ENCODE measurements at regions of chr17 and their contacts with region 1.

Region 1: DNA sequence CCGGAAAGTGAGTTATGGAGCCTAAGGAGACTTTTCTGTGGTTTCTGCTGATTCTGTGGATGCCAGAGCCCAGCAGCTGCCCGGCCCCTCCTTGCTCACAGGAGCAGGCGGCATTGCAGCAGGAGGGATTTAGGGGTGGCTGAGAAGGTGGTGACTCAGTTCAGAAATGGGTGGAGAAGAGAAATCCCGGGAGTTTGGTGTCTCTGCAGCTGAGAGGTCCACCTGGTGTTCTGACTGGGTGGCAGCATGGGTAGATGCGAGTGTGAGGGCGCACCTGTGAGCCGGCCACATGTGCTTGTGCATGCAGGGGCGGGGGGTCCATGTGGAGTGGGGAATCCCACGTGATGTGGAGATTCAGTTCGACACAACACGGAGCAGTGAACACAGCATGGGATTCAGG is 16.1 kb upstream of the SPPL2C start:
- DNase-seq: no peak
- H3K4me3 ChIP-seq: no peak overlapping the region
- H3K27ac ChIP-seq: no peak overlapping the region
- H3K4me1 ChIP-seq: no peaks in the 10 kb centered on the region
- H3K27me3 ChIP-seq: no peaks in the 10 kb centered on the region
- CTCF ChIP-seq: no peak

Region 2: DNA sequence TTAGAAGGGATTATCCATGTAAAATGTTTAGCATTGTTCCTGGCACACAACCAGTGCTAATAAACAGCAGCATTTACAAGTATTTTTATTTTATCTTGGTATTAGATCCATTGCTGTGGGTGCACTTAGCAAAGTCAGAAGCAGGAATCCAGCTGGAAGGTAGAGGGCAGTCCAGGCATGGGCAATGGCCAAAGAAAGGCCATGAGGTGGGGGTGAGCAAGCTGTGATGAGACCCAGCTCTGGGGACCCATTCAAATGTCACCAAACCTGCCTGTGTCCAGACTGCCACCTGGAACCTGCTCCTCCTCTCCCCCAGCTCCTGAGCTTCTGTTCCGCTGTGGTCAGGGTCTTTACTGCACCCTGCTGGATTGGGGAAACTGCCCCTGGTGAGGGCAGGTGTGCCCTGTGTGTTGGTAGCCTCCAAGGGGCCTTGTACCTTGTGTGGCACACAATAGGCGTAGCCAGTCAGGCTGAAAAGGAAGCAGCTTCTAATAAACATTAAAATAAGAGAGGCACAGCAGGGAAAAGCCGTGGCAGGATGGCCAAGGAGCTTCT is 162.5 kb before region 1 on chr17:
- CTCF ChIA-PET with region 1: no interaction called
- dilution Hi-C with region 1: no loop called
- in situ Hi-C with region 1: no loop called
- intact Hi-C with region 1: loop called (anchors 1 kb)
- DNase-seq: no peak
- H3K4me3 ChIP-seq: no peak overlapping the region
- H3K27ac ChIP-seq: no peak overlapping the region
- H3K4me1 ChIP-seq: no peaks in the 10 kb centered on the region
- H3K27me3 ChIP-seq: no peaks in the 10 kb centered on the region
- CTCF ChIP-seq: peak in 1 of 2 donors; percentile 45

Region 3: GRCh38 chr17:45782889-45783592 is 45.6 kb before region 1 on chr17:
- CTCF ChIA-PET with region 1: no interaction called
- dilution Hi-C with region 1: no loop called
- in situ Hi-C with region 1: no loop called
- intact Hi-C with region 1: no loop called
- DNase-seq: no peak
- H3K4me3 ChIP-seq: no peak overlapping the region
- H3K27ac ChIP-seq: no peak overlapping the region
- H3K4me1 ChIP-seq: peaks cover 17% of the 10 kb centered on the region
- H3K27me3 ChIP-seq: peaks cover 35% of the 10 kb centered on the region
- CTCF ChIP-seq: no peak